Activated B cell treated with CpG ODN at 0.5 μM for 24 hours (primary cell): ENCODE measurements at regions of chrX and their contacts with region 1.

Region 1: DNA sequence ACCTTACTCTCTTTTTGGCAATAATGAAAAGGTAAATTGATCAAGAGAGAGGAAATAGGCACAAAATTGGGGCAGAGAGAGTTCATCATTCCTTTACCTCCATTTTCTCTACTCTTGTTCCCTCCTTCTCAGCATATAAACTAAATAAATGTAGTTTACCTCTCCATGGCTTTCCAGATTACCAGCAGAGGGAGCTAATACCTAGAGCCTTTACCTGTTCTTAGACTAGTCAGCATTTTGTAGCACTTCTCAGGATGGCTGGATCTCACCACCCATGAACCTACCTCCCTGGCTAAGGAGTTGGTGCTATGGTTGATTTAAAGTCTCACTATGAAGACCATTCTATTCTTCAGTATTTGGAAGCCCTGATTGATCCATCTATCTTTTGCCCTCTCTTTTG is 15.7 kb downstream of the OFD1 start:
- DNase-seq: no peak
- ATAC-seq: peak; percentile 49
- H3K4me3 Mint-ChIP-seq: no peak overlapping the region
- H3K27ac Mint-ChIP-seq: peak overlapping the region; percentile 41
- H3K4me1 Mint-ChIP-seq: peaks cover 42% of the 10 kb centered on the region
- H3K27me3 Mint-ChIP-seq: no peaks in the 10 kb centered on the region
- CTCF ChIP-seq: no peak

Region 2: GRCh38 chrX:13658602-13659001 is 91.6 kb before region 1 on chrX:
- CTCF ChIA-PET with region 1: interaction called, 3 read pairs
- POLR2A ChIA-PET with region 1: interaction called, 4 read pairs
- intact Hi-C with region 1: loop called (anchors 1 kb)
- DNase-seq: no peak
- ATAC-seq: peak; percentile 37
- H3K4me3 Mint-ChIP-seq: no peak overlapping the region
- H3K27ac Mint-ChIP-seq: peak overlapping the region; percentile 46
- H3K4me1 Mint-ChIP-seq: peaks cover 14% of the 10 kb centered on the region
- H3K27me3 Mint-ChIP-seq: no peaks in the 10 kb centered on the region
- CTCF ChIP-seq: no peak

Region 3: DNA sequence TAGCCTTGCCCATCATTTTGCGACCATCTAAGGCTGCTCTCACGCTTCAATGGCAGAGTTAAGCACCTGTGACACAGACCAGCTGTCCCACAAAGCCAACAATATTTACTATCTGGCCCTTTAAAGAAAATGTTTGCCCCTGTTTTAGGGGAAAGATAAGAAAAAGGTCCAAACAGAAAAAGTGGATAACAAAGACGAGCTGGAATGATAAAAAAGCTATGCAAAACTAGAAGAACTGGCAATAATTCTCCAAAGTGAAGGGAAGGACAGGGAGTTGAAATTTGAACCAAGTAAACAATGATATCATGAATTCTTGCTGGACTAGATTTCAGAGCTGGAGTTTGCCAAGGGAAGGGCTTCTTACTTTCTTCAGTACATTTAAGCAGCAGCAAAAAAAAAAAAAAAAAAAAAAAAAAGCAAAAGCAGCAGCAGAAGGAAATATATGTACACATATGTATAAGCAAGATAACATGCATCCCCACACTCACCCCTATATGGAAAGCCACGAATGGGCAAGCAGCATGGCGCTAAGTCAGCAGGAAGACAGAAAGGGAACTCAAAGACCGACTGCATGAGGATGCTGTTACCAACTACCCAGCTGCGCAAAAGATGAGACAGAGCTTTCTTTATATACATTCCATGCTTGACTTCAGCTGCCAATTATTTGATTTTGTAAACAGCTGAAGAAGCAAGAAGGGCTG is 28.2 kb before region 1 on chrX:
- CTCF ChIA-PET with region 1: no interaction called
- POLR2A ChIA-PET with region 1: interaction called, 12 read pairs
- intact Hi-C with region 1: no loop called
- DNase-seq: no peak
- ATAC-seq: peak; percentile 14
- H3K4me3 Mint-ChIP-seq: no peak overlapping the region
- H3K27ac Mint-ChIP-seq: peak overlapping the region; percentile 41
- H3K4me1 Mint-ChIP-seq: peaks cover 21% of the 10 kb centered on the region
- H3K27me3 Mint-ChIP-seq: no peaks in the 10 kb centered on the region
- CTCF ChIP-seq: no peak

Region 4: DNA sequence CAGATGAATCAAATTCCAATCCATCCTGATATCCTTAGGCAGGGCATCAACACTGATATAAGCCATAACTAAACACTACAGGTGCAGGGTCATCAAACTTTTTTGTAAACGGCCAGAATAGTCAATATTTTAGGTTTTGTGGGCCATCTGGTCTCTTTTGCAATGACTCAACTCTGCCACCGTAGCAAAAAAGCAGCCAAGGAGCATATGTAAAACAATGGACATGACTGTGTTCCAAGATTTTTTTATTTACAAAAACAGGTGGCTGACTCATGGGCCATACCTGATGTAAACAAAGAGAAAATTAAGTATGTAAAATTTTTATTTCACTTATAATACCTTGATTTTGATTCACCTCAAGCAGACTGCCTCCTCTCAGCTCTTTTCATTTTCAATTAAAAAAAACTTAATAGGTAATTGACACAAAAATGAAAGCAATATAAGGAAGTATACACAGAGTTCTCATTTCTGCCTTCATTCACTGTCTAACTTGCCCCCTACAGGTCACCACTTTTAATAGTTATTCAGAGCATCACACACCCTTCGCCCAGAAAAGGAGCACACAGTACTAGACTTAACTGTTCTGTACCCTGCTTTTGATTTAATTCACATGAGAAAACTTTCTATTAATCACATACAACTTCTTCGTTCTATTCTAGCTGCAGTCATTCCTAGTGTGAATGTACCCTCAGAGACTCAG is 101.9 kb after region 1 on chrX:
- CTCF ChIA-PET with region 1: no interaction called
- POLR2A ChIA-PET with region 1: no interaction called
- intact Hi-C with region 1: loop called (anchors 1 kb)
- DNase-seq: no peak
- ATAC-seq: peak; percentile 61
- H3K4me3 Mint-ChIP-seq: no peak overlapping the region
- H3K27ac Mint-ChIP-seq: no peak overlapping the region
- H3K4me1 Mint-ChIP-seq: peaks cover 3% of the 10 kb centered on the region
- H3K27me3 Mint-ChIP-seq: no peaks in the 10 kb centered on the region
- CTCF ChIP-seq: no peak